Activated naive CD8-positive, alpha-beta T cell treated with anti-CD3 and anti-CD28 coated beads, Interleukin-2, amount 10 ng/mL, durations not matched to agents 7 days and 5 days (primary cell): ENCODE measurements at regions of chr7 and their contacts with region 1.

Region 1: GRCh38 chr7:32905175-32905662 is 13.7 kb upstream of the KBTBD2 start:
- DNase-seq: peak; percentile 67
- ATAC-seq: peak; percentile 93
- H3K4me3 Mint-ChIP-seq: peak overlapping the region; percentile 85
- H3K27ac Mint-ChIP-seq: peak overlapping the region; percentile 96
- H3K4me1 Mint-ChIP-seq: peaks cover 9% of the 10 kb centered on the region
- H3K27me3 Mint-ChIP-seq: no peaks in the 10 kb centered on the region

Region 2: GRCh38 chr7:32921896-32922295 is 16.7 kb after region 1 on chr7:
- POLR2A ChIA-PET with region 1: no interaction called
- DNase-seq: no peak
- ATAC-seq: no peak
- H3K4me3 Mint-ChIP-seq: no peak overlapping the region
- H3K27ac Mint-ChIP-seq: no peak overlapping the region
- H3K4me1 Mint-ChIP-seq: peaks cover 2% of the 10 kb centered on the region
- H3K27me3 Mint-ChIP-seq: peaks cover 2% of the 10 kb centered on the region

Region 3: GRCh38 chr7:32942786-32943653 is 37.8 kb after region 1 on chr7:
- POLR2A ChIA-PET with region 1: interaction called, 19 read pairs
- DNase-seq: peak; percentile 78
- ATAC-seq: peak; percentile 89
- H3K4me3 Mint-ChIP-seq: peak overlapping the region; percentile 71
- H3K27ac Mint-ChIP-seq: no peak overlapping the region
- H3K4me1 Mint-ChIP-seq: peaks cover 10% of the 10 kb centered on the region
- H3K27me3 Mint-ChIP-seq: peaks cover 16% of the 10 kb centered on the region